Posterior vena cava (tissue), 2 donors: ENCODE measurements at regions of chr6 and their contacts with region 1.

Region 1: GRCh38 chr6:150079604-150080003 is 10.7 kb upstream of the ULBP3 start:
- DNase-seq: no peak

Region 2: DNA sequence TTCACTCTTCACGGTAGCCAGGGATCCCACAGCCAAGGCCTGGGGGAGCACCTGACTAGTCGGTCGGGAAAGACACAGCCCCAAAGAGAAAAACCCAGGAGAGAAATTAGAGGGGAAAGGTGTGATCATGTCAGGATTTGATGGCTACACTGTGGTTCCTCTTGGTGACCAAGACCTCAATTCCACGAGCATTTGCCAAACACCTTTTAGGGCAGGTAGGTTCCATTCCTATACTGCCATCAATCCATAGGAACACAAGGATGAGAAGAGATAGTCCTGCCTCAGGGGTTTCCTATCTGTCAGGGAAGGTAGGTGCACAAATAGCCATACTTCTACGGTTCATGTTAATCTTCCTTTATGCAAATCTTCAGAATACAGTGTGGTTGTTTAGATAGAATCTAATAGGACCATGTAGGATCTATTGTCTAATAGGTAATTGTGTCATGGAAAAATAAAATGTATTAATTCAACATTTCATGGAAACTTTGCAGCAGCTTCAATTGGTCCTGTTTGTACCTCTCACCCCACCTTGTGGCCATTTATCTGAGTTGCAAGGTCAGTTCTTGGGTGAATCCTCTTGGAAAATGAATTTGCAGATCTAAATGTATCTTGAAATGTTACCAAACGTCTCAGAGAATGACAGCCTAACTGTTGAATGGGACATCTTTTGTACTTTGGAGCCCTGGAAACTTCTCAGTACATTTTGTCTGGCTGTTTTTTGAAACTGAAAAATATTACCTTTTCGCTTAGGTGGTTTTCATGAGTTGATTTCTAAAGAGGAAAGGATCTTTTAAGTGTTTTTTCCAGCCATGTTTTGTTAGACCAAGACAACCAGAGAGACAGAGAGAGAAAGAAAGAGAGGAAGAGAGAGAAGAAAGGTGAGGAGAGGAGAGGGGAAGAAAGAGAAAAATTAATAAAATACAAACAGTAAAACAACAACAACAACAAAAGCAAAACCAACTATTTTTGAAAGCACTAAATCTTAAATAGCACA is 255.5 kb after region 1 on chr6:
- intact Hi-C with region 1: loop called (anchors 5 kb)
- DNase-seq: no peak

Region 3: GRCh38 chr6:150395398-150396009 is 315.9 kb after region 1 on chr6:
- intact Hi-C with region 1: loop called (anchors 10 kb)
- DNase-seq: no peak